PC-9 (cell line): ENCODE measurements at regions of chr17 and their contacts with region 1.

Region 1: GRCh38 chr17:60102632-60103096 is 23.9 kb upstream of the HEATR6 start:
- DNase-seq: peak in 1 of 2 experiments; percentile 40
- H3K4me3 ChIP-seq: peak overlapping the region; percentile 32; the same call in 1 of the 2 replicates
- H3K27ac ChIP-seq: no peak overlapping the region
- H3K4me1 ChIP-seq: no peaks in the 10 kb centered on the region
- H3K27me3 ChIP-seq: no peaks in the 10 kb centered on the region
- CTCF ChIP-seq: no peak

Region 2: GRCh38 chr17:59047616-59048015 is 1055.0 kb before region 1 on chr17:
- CTCF ChIA-PET with region 1: no interaction called
- POLR2A ChIA-PET with region 1: no interaction called
- intact Hi-C with region 1: no loop called
- DNase-seq: no peak
- H3K4me3 ChIP-seq: no peak overlapping the region
- H3K27ac ChIP-seq: no peak overlapping the region
- H3K4me1 ChIP-seq: no peaks in the 10 kb centered on the region
- H3K27me3 ChIP-seq: no peaks in the 10 kb centered on the region
- CTCF ChIP-seq: no peak

Region 3: DNA sequence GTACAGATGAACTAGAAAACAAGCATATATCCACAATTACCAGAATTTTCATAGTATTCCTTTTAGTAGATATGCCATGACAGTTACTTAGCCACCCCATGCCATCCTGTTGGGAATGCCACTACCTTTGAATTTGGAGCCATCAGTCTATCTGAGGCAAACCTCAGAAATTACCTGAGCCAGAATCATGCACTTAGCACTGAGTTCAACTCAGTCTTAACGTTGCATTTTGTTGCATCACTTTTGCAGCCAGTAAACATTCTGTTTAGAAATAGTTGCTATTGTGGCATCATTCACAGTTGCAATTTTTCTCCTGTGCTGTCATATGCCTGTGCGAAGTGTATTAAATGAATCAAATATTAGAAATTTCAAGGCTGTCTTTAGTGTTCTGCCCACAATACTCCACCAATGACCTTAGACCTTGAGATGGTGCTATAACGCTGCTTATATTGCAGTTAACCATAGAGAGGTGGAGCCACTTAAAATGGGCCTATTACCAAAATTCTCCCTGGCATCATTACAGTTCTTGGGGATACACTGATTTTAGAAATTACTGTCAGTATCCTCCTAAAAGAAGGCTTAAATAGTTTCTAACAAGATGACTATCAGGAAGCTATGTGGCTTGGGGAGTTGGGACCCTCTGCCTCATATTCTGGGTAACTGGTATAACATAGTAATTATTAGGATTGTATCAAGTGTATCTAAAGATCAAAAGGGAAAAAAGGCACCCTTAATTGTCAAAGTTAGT is 406.5 kb before region 1 on chr17:
- CTCF ChIA-PET with region 1: no interaction called
- POLR2A ChIA-PET with region 1: no interaction called
- intact Hi-C with region 1: no loop called
- DNase-seq: no peak
- H3K4me3 ChIP-seq: no peak overlapping the region
- H3K27ac ChIP-seq: peak overlapping the region; percentile 81
- H3K4me1 ChIP-seq: peaks cover 12% of the 10 kb centered on the region; the same call in 1 of the 2 replicates
- H3K27me3 ChIP-seq: no peaks in the 10 kb centered on the region
- CTCF ChIP-seq: no peak

Region 4: GRCh38 chr17:60049936-60050335 is 52.7 kb before region 1 on chr17:
- CTCF ChIA-PET with region 1: no interaction called
- POLR2A ChIA-PET with region 1: no interaction called
- intact Hi-C with region 1: no loop called
- DNase-seq: no peak
- H3K4me3 ChIP-seq: no peak overlapping the region
- H3K27ac ChIP-seq: no peak overlapping the region
- H3K4me1 ChIP-seq: no peaks in the 10 kb centered on the region
- H3K27me3 ChIP-seq: no peaks in the 10 kb centered on the region
- CTCF ChIP-seq: no peak

Region 5: GRCh38 chr17:60127068-60128054 is 24.7 kb after region 1 on chr17:
- CTCF ChIA-PET with region 1: no interaction called
- POLR2A ChIA-PET with region 1: no interaction called
- intact Hi-C with region 1: no loop called
- DNase-seq: no peak
- H3K4me3 ChIP-seq: no peak overlapping the region
- H3K27ac ChIP-seq: no peak overlapping the region
- H3K4me1 ChIP-seq: no peaks in the 10 kb centered on the region
- H3K27me3 ChIP-seq: no peaks in the 10 kb centered on the region
- CTCF ChIP-seq: no peak

Region 6: DNA sequence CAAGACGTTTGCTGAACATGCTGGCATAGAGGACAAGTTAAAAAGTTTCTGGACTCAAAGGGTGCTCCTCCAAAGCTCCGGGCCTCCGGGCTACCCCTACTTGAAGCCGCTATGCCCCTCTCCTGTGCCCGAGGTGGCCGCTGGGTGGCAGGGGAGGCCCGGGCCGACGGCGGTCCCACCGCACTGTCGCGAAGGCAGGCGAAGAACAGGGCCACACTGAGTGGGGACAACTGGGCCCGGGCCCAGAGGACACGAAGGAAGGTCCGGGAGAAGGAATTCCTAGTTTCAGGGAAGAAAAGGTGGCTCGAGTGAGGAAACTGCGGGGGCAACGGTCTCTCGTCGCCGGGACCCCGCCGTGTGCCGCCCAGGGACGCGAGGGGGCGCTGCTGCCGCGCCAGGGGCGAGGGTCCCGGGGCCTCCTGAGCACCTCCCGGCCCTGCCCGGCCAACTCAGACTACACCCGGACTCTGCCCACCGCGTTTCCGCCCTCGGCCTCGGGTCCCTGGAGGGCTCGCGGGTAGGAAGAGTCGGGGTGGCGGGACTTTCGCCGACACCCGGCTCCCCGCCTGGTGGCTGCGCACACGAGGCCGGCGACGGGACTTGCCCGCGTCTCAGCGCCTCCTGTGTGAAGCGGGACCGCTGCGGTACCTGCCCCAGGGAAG is 318.7 kb after region 1 on chr17:
- CTCF ChIA-PET with region 1: no interaction called
- POLR2A ChIA-PET with region 1: interaction called, 11 read pairs
- intact Hi-C with region 1: no loop called
- DNase-seq: peak in 1 of 2 experiments; percentile 52
- H3K4me3 ChIP-seq: peak overlapping the region; percentile 30; the same call in 1 of the 2 replicates
- H3K27ac ChIP-seq: no peak overlapping the region
- H3K4me1 ChIP-seq: no peaks in the 10 kb centered on the region; the same call in 1 of the 2 replicates
- H3K27me3 ChIP-seq: no peaks in the 10 kb centered on the region
- CTCF ChIP-seq: peak; percentile 64

Region 7: DNA sequence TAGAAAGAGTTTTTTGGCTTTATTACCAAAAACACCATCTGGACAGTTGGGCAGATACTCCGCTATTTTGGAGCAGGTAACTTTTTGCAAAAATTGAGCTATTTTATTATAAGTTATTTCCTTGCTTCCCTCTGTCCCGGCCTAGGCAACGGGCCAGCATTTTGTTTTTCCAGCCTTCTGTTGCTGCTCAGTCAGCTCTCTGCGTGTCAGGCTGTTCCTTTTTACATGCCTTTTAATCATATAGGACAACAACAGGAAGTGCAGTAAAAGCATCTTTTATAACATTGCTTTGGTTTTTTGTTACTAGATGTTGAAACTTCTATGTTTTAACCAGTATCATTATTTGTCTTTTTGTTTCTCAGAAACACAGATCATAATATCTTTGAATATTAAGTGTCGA is 527.7 kb after region 1 on chr17:
- CTCF ChIA-PET with region 1: no interaction called
- POLR2A ChIA-PET with region 1: no interaction called
- intact Hi-C with region 1: loop called (anchors 10 kb)
- DNase-seq: no peak
- H3K4me3 ChIP-seq: no peak overlapping the region
- H3K27ac ChIP-seq: no peak overlapping the region
- H3K4me1 ChIP-seq: no peaks in the 10 kb centered on the region
- H3K27me3 ChIP-seq: no peaks in the 10 kb centered on the region
- CTCF ChIP-seq: no peak